ENCODE measurements at regions of chr15 and their contacts with region 1.

Region 1: GRCh38 chr15:64381000-64381752 is at the start of gene PCLAF:
- DNase-seq: peak; percentile 98
- H3K27ac ChIP-seq: peak within 1 kb of the TSS; percentile 81
- CTCF ChIP-seq: no peak

Region 2: GRCh38 chr15:63772520-63772919 is 608.7 kb before region 1 on chr15:
- CTCF ChIA-PET with region 1: no interaction called
- POLR2A ChIA-PET with region 1: interaction called, 11 read pairs
- DNase-seq: no peak
- H3K27ac ChIP-seq: no peak overlapping the region
- CTCF ChIP-seq: no peak

Region 3: DNA sequence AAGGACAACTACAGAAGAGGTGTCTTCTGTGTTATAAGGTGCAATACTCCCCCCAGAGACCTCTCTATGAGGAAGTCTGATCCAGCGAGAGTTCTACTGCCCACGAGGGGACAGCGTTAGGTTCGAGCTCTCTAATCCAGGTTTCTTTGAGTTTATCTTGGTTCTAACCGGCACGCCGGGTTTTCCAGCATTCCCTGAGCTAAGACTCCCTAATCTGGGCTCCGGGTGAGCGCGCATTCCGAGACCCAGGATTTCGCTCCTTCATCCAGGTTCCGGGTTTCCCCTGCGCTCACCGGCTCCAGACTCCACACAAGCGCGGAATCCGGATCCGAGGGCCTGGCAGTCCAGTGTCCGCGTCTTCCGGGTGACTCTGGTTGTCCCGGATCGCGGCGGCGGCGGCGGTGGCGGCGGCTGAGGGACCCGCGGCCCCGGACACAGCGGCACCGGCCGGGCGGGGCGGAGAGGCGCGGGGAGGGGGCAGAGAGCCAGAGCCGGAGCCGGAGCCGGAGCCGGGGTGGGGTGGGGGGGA is 79.1 kb after region 1 on chr15 and contains the start of gene ZNF609:
- CTCF ChIA-PET with region 1: no interaction called
- POLR2A ChIA-PET with region 1: no interaction called
- DNase-seq: peak; percentile 98
- H3K27ac ChIP-seq: peak within 1 kb of the TSS; percentile 95
- CTCF ChIP-seq: no peak

Region 4: DNA sequence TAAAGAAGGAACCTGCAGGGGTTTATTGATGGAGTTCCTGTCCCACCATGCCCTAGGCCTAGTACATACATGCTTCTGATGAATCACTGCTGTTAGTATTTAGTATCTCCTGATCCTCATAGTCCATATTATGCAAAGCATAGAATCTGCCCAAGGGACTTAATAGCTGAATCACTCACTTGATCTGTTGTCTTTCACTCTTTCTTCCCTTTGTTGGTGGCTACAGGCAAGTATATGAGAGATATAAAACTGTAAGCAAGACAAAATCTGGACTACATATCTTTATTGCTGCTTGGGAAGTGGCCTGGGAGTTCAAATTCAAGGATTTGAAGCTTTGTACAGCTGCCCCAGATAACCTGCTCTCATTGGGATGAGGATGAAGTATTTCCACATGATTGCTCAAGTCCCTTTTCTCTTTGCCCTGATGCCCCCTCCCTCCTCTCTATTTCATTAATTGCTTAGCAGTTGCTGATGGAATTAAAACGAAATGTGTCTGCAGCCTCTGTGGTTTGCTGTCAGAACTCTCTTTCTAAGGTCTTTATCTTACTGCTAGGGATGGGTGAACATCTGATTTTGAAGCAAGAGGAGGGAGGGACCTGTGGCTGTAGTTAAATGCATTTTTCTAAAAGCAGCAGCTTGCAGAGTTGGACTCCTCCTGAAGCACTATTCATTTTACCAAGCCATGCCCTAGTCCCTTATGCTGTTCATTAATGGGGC is 193.3 kb after region 1 on chr15:
- CTCF ChIA-PET with region 1: no interaction called
- POLR2A ChIA-PET with region 1: interaction called, 10 read pairs
- DNase-seq: peak; percentile 91
- H3K27ac ChIP-seq: no peak overlapping the region
- CTCF ChIP-seq: no peak